ENCODE measurements at regions of chr1 and their contacts with region 1.

Region 1: DNA sequence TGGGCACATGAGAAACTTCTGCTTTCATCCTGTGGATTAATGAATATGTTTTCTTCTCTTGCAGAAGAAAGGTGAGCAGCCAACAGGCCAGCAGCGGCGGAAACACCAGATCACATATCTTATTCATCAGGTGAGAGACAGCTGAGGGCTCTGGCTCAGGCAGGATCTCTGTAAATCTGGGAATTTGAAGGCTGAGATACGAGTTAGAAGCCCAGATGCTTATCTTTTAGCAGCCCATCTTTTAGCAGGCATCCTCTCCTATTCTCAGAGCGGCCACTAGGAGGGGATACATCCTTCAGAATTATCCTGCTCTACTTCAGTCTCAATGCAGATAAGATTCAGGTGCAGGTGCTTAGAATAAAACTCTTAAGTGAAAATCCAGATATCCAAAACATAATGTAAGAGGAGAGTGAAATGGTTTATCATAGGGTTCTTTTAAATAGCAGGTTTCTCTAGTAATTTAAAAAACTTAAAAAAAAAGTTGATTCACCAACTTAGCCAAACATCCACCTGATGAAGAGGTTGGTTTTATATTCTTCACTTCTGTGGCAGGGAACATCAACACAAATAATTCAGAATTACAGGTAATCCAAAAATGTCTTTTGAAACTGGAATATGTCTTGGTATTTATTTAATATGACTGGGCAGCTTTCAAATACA is 19.3 kb downstream of the SH2D2A start:
- DNase-seq: peak; percentile 47
- H3K4me3 ChIP-seq: no peak overlapping the region
- H3K27ac ChIP-seq: no peak overlapping the region
- H3K4me1 ChIP-seq: no peaks in the 10 kb centered on the region
- H3K27me3 ChIP-seq: no peaks in the 10 kb centered on the region
- CTCF ChIP-seq: peak; percentile 83 to 94

Region 2: GRCh38 chr1:155920717-155921116 is 876.6 kb before region 1 on chr1:
- CTCF ChIA-PET with region 1: no interaction called
- dilution Hi-C with region 1: no loop called
- in situ Hi-C with region 1: no loop called
- intact Hi-C with region 1: no loop called
- DNase-seq: no peak
- H3K4me3 ChIP-seq: no peak overlapping the region
- H3K27ac ChIP-seq: no peak overlapping the region
- H3K4me1 ChIP-seq: no peaks in the 10 kb centered on the region
- H3K27me3 ChIP-seq: no peaks in the 10 kb centered on the region
- CTCF ChIP-seq: no peak

Region 3: DNA sequence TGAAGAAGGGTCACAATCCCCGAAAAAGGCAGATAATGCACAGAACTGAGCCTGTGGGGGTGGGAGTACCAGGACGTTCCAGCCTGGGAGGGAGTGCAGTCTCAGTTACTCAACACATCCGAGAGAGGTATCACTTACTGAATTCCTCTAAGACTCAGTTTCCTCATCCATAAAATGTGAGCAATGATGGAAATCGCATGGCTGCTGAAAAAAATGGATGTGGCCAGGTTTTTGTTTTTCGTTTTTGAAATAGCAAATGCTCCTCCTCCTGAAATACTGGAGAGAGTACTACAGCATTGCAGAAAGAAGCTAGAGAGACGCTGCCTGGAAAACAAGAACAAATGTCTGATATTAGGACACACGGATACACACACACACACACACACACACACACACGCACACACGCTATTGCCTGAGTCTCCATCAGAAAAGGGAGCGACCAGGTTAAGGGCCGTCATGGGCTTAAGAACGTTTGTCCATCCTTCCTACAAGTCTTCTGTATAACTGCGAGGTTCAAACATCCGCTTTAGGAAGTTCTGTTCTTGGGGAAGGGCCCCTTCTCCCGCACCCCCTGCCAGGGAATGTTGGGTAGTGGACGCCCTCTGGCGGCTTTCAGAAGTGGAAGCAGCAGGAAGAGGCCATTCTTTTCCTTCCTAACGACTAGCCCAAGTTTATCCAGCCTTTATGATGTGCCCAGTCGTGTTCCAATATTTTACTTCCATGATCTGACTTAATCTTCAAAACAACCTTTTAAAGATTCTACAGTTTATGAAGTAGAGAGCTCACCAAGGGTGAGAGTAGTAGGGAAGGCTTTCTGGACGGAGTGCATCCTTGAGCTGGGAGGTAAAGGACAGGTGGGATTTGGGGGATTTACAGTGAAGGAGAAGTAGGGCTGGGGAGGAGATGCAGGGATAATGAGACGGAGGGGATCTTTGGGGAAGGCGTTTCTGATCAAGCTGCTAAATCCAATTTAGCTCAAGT is 119.4 kb before region 1 on chr1:
- CTCF ChIA-PET with region 1: interaction called, 11 read pairs
- dilution Hi-C with region 1: no loop called
- in situ Hi-C with region 1: no loop called
- intact Hi-C with region 1: no loop called
- DNase-seq: peak; percentile 67
- H3K4me3 ChIP-seq: no peak overlapping the region
- H3K27ac ChIP-seq: no peak overlapping the region
- H3K4me1 ChIP-seq: peaks cover 4% of the 10 kb centered on the region
- H3K27me3 ChIP-seq: peaks cover 19% of the 10 kb centered on the region
- CTCF ChIP-seq: peak; percentile 91 to 94

Region 4: GRCh38 chr1:156689035-156689952 is 108.0 kb before region 1 on chr1:
- CTCF ChIA-PET with region 1: no interaction called
- dilution Hi-C with region 1: no loop called
- in situ Hi-C with region 1: no loop called
- intact Hi-C with region 1: loop called (anchors 1 kb)
- DNase-seq: peak; percentile 77
- H3K4me3 ChIP-seq: peak overlapping the region in 1 of 3 experiments; percentile 27
- H3K27ac ChIP-seq: no peak overlapping the region
- H3K4me1 ChIP-seq: peaks cover 49% of the 10 kb centered on the region
- H3K27me3 ChIP-seq: no peaks in the 10 kb centered on the region
- CTCF ChIP-seq: peak; percentile 85 to 94

Region 5: DNA sequence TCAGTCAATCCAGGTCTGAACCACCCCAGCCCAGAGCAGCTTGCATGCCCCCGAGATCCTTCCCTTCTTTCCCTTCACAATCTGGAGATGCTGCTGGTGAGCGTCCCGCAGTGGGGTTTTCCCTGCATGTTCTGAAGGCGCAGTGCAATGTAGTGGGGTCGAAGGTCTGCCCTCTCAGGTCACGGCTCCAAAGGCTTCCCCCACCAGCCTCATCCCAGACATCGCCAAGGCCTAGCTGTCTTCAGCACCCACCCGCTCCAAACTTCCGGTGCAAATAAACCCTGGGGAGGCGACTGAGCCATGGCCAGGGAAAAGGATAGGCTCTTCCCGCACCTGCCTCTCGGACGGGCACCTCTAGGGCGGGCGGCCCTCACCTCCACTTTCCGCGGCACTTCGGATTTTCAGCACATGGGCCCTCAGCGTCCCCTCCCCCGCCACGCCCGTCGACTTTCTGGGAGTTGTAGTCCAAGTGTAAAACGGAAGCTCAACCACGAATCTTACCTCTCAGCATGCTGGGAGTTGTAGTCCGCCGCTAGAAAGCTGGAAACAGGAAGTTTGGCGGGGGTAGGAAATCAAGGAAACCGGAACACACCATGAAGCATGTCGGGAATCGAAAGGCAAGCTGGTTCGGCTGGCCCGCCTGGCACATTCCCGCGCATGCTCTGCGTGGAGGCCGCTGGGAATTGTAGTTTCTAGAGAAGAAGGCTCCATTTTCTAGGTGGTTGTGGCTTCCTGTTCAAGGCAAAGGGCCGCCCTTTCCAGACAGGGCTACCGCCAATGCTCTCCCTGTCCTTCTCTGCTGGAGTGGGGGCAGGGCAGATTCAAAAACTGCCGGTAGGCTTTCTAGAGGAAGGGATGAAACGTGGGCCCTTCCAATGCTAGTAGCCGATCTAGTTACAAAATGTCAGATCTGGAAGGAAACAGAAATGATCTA is 56.4 kb before region 1 on chr1 and contains the start of gene MRPL24:
- CTCF ChIA-PET with region 1: no interaction called
- dilution Hi-C with region 1: loop called (anchors 5 kb)
- in situ Hi-C with region 1: no loop called
- intact Hi-C with region 1: no loop called
- DNase-seq: peak; percentile 100
- H3K4me3 ChIP-seq: peak within 1 kb of the TSS; percentile 50 to 85 (median 73)
- H3K27ac ChIP-seq: peak within 1 kb of the TSS; percentile 37
- H3K4me1 ChIP-seq: peaks cover 13% of the 10 kb centered on the region
- H3K27me3 ChIP-seq: no peaks in the 10 kb centered on the region
- CTCF ChIP-seq: no peak
- total RNA-seq, gene MRPL24: 25.0 to 86.1 TPM

Region 6: DNA sequence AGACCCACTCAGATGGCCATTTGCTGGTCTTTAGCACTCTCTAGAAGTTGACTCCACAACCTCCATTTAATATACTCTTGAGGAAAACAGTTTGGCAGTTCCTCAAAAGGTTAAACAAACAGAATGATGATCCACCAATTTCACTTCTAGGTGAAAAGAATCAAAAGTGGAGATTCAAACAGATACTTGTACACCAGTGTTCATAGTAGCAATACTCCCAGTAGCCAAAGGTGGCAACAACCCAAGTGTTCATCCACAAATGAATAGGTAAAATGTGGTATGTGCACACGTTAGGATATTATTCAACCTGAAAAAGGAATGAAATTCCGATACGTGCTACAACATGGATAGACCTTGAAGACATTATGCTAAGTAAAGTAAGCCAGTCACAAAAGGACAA is 23.7 kb before region 1 on chr1:
- CTCF ChIA-PET with region 1: no interaction called
- dilution Hi-C with region 1: no loop called
- in situ Hi-C with region 1: no loop called
- intact Hi-C with region 1: loop called (anchors 2 kb)
- DNase-seq: no peak
- H3K4me3 ChIP-seq: no peak overlapping the region
- H3K27ac ChIP-seq: no peak overlapping the region
- H3K4me1 ChIP-seq: peaks cover 8% of the 10 kb centered on the region
- H3K27me3 ChIP-seq: no peaks in the 10 kb centered on the region
- CTCF ChIP-seq: no peak

Region 7: DNA sequence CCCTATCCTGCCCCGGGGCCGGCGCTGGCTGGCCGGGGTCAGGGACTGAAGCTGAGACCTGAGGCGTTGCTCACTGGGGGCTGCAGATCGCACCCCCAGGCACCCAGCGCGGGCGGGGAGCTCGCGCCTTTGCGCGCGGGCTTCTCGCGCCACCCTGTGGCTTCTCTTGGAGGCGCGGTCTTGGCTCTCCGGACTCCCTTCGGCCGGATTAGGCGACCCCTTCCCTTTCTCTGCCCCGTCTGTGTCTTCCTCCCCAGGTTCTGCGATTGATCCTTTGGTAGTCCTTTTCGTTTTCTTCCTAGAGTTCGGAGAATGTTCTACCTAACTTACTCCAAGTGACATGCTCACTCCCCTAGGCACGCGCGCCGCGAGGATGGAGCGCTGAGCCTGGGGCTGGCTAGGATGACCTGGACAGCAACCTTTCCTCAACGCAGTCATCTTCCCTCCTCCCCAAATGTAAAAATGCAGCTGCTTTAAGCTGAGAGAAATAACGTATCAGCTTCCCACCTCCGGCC is 62.8 kb after region 1 on chr1:
- CTCF ChIA-PET with region 1: interaction called, 3 read pairs
- dilution Hi-C with region 1: loop called (anchors 5 kb)
- in situ Hi-C with region 1: no loop called
- intact Hi-C with region 1: loop called (anchors 1 kb)
- DNase-seq: peak; percentile 49
- H3K4me3 ChIP-seq: peak overlapping the region; percentile 31 to 46 (median 38)
- H3K27ac ChIP-seq: no peak overlapping the region
- H3K4me1 ChIP-seq: peaks cover 10% of the 10 kb centered on the region
- H3K27me3 ChIP-seq: peaks cover 27% of the 10 kb centered on the region
- CTCF ChIP-seq: peak; percentile 57 to 83

Region 8: GRCh38 chr1:156927215-156928042 is 130.1 kb after region 1 on chr1:
- CTCF ChIA-PET with region 1: no interaction called
- dilution Hi-C with region 1: no loop called
- in situ Hi-C with region 1: no loop called
- intact Hi-C with region 1: loop called (anchors 2 kb)
- DNase-seq: peak; percentile 72
- H3K4me3 ChIP-seq: peak overlapping the region in 2 of 3 experiments; percentile 36 to 49
- H3K27ac ChIP-seq: no peak overlapping the region
- H3K4me1 ChIP-seq: peaks cover 17% of the 10 kb centered on the region
- H3K27me3 ChIP-seq: peaks cover 33% of the 10 kb centered on the region
- CTCF ChIP-seq: peak; percentile 69 to 89